GM10248 (cell line): ENCODE measurements at regions of chr6 and their contacts with region 1.

Region 1: GRCh38 chr6:103122766-103123601 is 1729.5 kb downstream of the GRIK2 start:
- DNase-seq: peak; percentile 26
- CTCF ChIP-seq: peak; percentile 63

Region 2: GRCh38 chr6:102853269-102853955 is 269.6 kb before region 1 on chr6:
- CTCF ChIA-PET with region 1: interaction called, 18 read pairs
- POLR2A ChIA-PET with region 1: no interaction called
- DNase-seq: no peak
- CTCF ChIP-seq: no peak

Region 3: DNA sequence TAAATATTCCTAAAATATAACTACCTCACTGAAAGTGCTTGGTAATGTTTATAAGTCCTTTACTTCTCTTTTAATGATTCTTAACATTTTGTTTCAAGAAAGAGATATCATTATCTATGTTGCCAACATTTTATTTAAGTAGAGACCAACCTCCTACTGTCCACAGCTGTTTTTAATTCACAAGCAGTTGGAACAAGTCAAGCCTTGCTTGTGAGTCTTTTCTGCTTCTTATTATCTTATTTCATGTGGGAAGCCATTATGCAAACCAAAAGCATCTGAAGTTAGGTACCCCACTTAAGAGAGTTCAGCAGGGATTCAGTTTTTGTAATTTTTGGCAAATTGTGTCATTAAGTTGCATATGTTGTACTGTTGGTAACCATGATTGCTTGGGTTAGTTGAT is 15.0 kb before region 1 on chr6:
- CTCF ChIA-PET with region 1: interaction called, 12 read pairs
- POLR2A ChIA-PET with region 1: no interaction called
- DNase-seq: no peak
- CTCF ChIP-seq: no peak